ENCODE measurements at regions of chr4 and their contacts with region 1.

Region 1: DNA sequence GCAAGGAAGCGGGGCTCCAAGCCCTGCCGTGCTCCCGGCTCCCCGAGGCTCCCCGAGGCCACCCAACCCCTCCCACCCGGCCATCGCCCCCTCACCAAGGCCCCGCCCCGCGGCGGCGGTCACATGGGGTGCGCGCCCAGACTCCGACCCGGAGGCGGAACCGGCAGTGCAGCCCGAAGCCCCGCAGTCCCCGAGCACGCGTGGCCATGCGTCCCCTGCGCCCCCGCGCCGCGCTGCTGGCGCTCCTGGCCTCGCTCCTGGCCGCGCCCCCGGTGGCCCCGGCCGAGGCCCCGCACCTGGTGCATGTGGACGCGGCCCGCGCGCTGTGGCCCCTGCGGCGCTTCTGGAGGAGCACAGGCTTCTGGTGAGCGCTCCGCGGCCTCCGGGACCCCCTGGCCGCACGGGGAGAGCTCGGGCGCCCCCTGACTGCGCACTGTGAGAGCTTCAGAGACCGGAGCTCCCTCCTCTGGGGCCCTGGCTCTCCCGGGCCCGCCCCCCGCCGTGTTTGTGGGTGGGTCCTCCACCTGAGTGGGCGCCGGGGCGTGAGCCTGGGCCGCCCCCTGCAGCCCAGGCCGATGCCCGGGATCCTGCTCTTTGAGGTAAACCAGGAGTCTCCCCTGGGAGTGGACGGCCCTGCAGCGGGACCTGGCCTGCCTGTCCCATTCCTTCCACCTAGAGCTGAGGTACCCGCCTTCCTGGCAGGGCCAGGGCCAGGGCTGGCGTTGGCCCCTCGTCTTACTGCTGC is at the start of gene IDUA:
- DNase-seq: peak; percentile 86
- H3K4me3 ChIP-seq: peak within 1 kb of the TSS; percentile 38 to 77 (median 74)
- H3K27ac ChIP-seq: peak within 1 kb of the TSS; percentile 61 to 72 (median 64)
- H3K4me1 ChIP-seq: peaks cover 0 to 28% (median 25%) of the 10 kb centered on the region in 4 donors
- H3K27me3 ChIP-seq: no peaks in the 10 kb centered on the region
- CTCF ChIP-seq: peak in 1 of 4 experiments; percentile 34
- EP300 ChIP-seq: no peak
- POLR2A ChIP-seq: no peak
- total RNA-seq, gene IDUA: 7.1 to 15.2 (median 7.6) TPM

Region 2: GRCh38 chr4:742742-743311 is 244.2 kb before region 1 on chr4:
- intact Hi-C with region 1: loop called (anchors 5 kb)
- DNase-seq: peak; percentile 80
- H3K4me3 ChIP-seq: no peak overlapping the region
- H3K27ac ChIP-seq: no peak overlapping the region
- H3K4me1 ChIP-seq: no peaks in the 10 kb centered on the region
- H3K27me3 ChIP-seq: no peaks in the 10 kb centered on the region
- CTCF ChIP-seq: peak; percentile 56 to 95 (median 79)
- EP300 ChIP-seq: no peak
- POLR2A ChIP-seq: no peak

Measured in sigmoid colon (tissue), 7 donors.